Sigmoid colon (tissue), 7 donors: ENCODE measurements at regions of chr12 and their contacts with region 1.

Region 1: DNA sequence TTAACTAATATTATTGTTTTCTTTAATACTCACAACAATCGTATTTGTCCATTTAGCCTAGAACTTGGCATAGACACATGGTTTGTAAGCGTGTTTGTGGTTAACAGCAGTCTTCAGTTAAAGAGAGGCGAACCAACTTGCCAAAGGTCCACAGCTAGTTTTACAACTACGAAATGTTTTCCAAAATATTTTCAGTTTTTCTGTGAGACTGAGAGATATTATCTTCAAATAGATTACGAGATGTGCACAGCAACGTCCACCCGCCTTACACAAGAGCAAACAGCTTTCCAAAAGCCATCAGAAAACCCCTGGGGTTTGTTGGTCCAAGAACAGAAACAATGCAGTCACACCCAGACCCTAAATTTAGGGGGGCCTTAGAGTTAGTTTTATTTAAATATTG is 58.6 kb upstream of the RASSF3 start:
- DNase-seq: peak; percentile 47
- H3K4me3 ChIP-seq: no peak overlapping the region
- H3K27ac ChIP-seq: no peak overlapping the region
- H3K4me1 ChIP-seq: peaks cover 0 to 6% (median 2%) of the 10 kb centered on the region in 4 donors
- H3K27me3 ChIP-seq: no peaks in the 10 kb centered on the region
- CTCF ChIP-seq: no peak
- EP300 ChIP-seq: no peak
- POLR2A ChIP-seq: no peak

Region 2: DNA sequence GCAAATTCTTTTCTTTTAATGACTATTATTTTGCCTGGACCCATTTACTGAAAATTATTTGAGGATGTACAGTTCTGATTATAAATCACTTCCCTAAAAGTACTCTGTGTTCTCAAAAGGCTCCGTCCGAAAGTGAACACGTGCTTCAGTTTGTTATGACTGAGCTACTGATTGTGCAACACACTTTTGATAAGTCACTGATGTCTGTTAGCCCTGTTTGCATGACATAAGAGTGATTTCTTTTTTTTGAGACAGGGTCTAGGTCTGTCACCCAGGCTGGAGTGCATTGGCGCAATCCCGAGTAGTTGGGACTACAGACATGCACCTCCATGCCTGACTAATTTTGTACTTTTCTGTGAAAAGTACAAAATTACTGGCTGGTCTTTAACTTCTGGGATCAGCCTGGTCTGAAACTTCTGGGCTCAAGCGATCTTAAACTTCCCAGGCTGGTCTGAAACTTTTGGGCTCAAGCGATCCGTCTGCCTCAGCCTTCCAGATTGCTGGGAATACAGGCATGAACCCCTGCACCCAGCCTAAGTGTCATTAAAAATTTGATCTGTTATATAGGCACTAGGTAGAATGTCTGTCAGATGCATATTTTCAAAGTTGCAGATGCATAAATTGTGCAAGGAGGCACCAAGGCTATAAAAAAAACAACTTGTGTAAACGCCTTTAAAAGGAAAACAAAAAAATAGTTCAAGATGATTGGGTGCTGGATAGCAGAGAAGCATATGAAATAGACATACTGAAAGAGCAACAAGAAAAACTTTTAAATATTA is 595.7 kb before region 1 on chr12:
- intact Hi-C with region 1: no loop called
- DNase-seq: peak; percentile 83
- H3K4me3 ChIP-seq: no peak overlapping the region
- H3K27ac ChIP-seq: peak overlapping the region; percentile 37 to 60 (median 55)
- H3K4me1 ChIP-seq: peaks cover 0 to 7% (median 3%) of the 10 kb centered on the region in 4 donors
- H3K27me3 ChIP-seq: no peaks in the 10 kb centered on the region
- CTCF ChIP-seq: no peak
- EP300 ChIP-seq: peak in 2 of 4 donors; percentile 70 to 79
- POLR2A ChIP-seq: no peak

Region 3: DNA sequence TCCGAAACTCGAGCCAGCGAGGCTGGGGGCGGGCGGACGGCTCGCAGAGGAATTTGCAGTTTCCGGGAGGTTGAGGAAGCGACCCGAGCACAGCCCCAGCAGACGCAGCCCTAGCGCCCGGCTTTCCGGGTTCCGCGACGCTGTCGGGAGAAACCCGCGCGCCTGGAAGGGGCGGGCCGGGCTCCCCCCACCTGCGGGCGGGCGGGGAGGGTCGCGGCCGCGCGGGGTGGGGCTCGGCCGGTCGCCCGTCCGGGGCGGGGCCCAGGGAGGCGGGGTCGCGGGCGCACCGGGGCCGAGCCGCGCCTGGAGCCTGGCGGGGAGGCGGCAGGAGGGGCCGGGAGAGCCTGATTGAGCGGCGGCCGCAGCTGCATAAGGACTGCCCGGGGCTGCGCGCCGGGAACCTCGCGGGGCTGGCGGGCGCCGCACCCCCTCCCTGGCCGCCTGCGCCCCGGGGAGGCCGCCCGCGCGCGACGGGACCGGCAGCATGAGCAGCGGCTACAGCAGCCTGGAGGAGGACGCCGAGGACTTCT is 58.5 kb after region 1 on chr12 and contains the start of gene RASSF3:
- intact Hi-C with region 1: loop called (anchors 2 kb)
- DNase-seq: peak; percentile 80
- H3K4me3 ChIP-seq: peak within 1 kb of the TSS; percentile 73 to 90 (median 78)
- H3K27ac ChIP-seq: peak within 1 kb of the TSS; percentile 87 to 92 (median 91)
- H3K4me1 ChIP-seq: peaks cover 0 to 31% (median 23%) of the 10 kb centered on the region in 4 donors
- H3K27me3 ChIP-seq: no peaks in the 10 kb centered on the region
- CTCF ChIP-seq: no peak
- EP300 ChIP-seq: no peak
- POLR2A ChIP-seq: no peak
- total RNA-seq, gene RASSF3: 143 to 348 (median 203) TPM